ENCODE measurements at regions of chr4 and their contacts with region 1.

Region 1: GRCh38 chr4:148441986-148442831 is at the start of gene NR3C2:
- DNase-seq: peak; percentile 98
- H3K4me3 Mint-ChIP-seq: peak within 1 kb of the TSS; percentile 91
- H3K27ac Mint-ChIP-seq: peak within 1 kb of the TSS; percentile 76
- H3K4me1 Mint-ChIP-seq: peaks cover 27% of the 10 kb centered on the region
- H3K27me3 Mint-ChIP-seq: peaks cover 49% of the 10 kb centered on the region
- total RNA-seq, gene NR3C2: 0.14 and 0.28 TPM in 2 replicates

Region 2: GRCh38 chr4:147586637-147587036 is 855.6 kb before region 1 on chr4:
- intact Hi-C with region 1: no loop called
- DNase-seq: no peak
- H3K4me3 Mint-ChIP-seq: no peak overlapping the region
- H3K27ac Mint-ChIP-seq: no peak overlapping the region
- H3K4me1 Mint-ChIP-seq: no peaks in the 10 kb centered on the region
- H3K27me3 Mint-ChIP-seq: peaks cover 7% of the 10 kb centered on the region

Region 3: GRCh38 chr4:147617173-147617840 is 824.9 kb before region 1 on chr4 and contains the start of gene TMEM184C:
- intact Hi-C with region 1: loop called (anchors 1 kb)
- DNase-seq: peak; percentile 100
- H3K4me3 Mint-ChIP-seq: peak within 1 kb of the TSS; percentile 99
- H3K27ac Mint-ChIP-seq: peak within 1 kb of the TSS; percentile 94
- H3K4me1 Mint-ChIP-seq: peaks cover 21% of the 10 kb centered on the region
- H3K27me3 Mint-ChIP-seq: peaks cover 17% of the 10 kb centered on the region
- total RNA-seq, gene TMEM184C: 18.3 and 19.7 TPM in 2 replicates

Region 4: DNA sequence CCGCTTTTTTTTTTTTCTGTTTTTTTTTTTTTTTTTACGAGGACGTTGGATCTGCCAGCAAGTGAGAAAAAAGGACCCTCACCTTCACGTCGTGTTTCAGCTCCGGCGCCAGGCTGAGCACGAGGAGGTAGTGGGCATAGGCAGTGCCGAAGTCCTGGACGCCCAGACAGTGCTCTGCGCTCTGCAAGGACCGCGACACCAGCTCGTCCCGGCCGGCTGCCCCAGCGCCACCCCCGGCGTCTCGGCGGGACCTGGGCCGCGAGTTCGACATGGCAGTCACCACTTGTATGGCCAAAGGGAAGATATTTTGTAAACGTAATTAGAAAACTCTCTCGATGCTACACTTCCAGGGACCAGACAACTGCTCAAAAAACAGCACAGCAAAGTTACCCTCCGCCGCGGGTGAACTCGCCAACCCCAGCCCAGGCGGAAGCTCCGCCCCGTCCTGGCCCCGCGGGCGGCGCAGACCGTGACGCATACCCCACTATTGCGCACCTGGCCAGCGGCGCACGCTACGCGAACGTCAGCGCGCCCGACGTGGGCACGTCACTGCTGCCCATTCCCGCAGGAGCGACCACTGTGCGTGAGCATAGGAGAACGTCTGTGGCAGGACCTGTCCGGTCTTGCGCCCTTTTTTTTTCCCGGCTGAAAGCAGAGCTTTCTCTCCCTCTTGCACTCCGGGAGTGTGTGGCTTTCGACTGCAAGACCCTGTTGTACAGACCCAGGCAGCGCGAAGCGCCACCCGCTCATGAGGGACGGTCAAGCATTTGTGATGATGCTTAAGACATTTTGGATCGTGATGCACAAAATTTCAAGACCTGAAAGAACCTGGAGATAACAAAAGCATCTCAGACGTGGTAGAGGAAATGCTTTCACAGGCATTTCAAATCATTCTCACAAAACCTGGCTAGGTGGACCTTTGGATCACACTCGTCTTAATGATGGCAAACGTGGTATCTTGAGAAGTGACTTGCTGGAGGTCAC is 758.2 kb before region 1 on chr4 and contains the start of gene PRMT9:
- intact Hi-C with region 1: loop called (anchors 1 kb)
- DNase-seq: peak; percentile 97
- H3K4me3 Mint-ChIP-seq: peak within 1 kb of the TSS; percentile 99
- H3K27ac Mint-ChIP-seq: peak within 1 kb of the TSS; percentile 97
- H3K4me1 Mint-ChIP-seq: peaks cover 28% of the 10 kb centered on the region
- H3K27me3 Mint-ChIP-seq: peaks cover 8% of the 10 kb centered on the region
- total RNA-seq, gene PRMT9: 8.1 TPM in 2 replicates

Region 5: GRCh38 chr4:147731580-147732517 is 710.4 kb before region 1 on chr4 and contains the start of gene ARHGAP10:
- intact Hi-C with region 1: loop called (anchors 5 kb)
- DNase-seq: peak; percentile 88
- H3K4me3 Mint-ChIP-seq: peak within 1 kb of the TSS; percentile 94
- H3K27ac Mint-ChIP-seq: peak within 1 kb of the TSS; percentile 90
- H3K4me1 Mint-ChIP-seq: peaks cover 34% of the 10 kb centered on the region
- H3K27me3 Mint-ChIP-seq: peaks cover 36% of the 10 kb centered on the region
- total RNA-seq, gene ARHGAP10: 7.4 and 8.3 TPM in 2 replicates

Region 6: DNA sequence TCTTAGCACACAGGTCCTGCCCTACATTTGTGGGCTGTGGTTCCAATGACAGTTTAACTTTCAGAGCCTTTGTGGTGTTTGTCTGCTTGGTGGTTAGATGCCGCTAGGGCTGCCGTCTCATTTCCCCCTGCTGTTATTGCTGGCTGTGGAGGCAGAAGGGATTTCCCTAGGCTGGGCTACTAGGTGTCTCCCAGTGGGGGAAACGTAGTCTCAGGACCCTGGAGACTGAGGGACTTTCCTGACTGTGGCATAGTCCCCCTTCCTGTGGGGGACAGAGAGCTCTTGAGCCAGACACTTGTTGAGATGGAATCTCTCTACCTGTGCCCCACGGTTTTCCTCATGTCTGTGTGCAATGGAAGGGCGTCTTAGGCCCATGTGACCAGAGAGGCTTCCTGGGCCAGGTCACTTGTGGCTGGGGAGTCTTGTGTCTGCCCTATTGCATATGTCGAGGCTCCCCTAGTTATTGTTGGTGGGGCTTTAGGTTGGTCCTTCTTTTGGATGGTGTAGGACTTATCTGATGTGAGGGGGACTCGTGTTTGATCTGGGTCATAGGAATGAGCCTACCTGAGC is 642.1 kb before region 1 on chr4:
- intact Hi-C with region 1: loop called (anchors 10 kb)
- DNase-seq: peak; percentile 90
- H3K4me3 Mint-ChIP-seq: peak overlapping the region; percentile 74
- H3K27ac Mint-ChIP-seq: peak overlapping the region; percentile 86
- H3K4me1 Mint-ChIP-seq: peaks cover 49% of the 10 kb centered on the region
- H3K27me3 Mint-ChIP-seq: peaks cover 15% of the 10 kb centered on the region

Region 7: DNA sequence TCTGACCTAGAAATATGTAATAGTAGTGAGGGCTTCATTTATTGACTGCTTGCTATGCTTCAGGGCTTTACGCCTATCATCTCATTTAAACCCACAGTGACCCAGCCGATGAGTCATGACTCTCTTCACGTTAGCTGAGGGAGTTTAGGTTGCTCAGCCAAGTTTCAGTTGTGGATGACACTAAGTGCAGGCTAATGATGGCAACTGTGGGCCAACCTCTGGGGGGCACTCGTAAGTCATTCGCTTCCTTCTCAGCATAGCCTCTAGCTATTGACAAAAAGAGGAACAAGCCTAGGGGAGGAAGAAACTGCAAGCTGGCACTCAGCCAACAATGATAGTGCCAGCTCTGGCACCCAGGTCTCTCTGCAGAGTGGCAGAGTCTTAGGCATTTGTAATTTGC is 385.3 kb before region 1 on chr4:
- intact Hi-C with region 1: loop called (anchors 5 kb)
- DNase-seq: peak; percentile 84
- H3K4me3 Mint-ChIP-seq: no peak overlapping the region
- H3K27ac Mint-ChIP-seq: no peak overlapping the region
- H3K4me1 Mint-ChIP-seq: peaks cover 71% of the 10 kb centered on the region
- H3K27me3 Mint-ChIP-seq: no peaks in the 10 kb centered on the region